IMR-90 (cell line): ENCODE measurements at regions of chr1 and their contacts with region 1.

Region 1: DNA sequence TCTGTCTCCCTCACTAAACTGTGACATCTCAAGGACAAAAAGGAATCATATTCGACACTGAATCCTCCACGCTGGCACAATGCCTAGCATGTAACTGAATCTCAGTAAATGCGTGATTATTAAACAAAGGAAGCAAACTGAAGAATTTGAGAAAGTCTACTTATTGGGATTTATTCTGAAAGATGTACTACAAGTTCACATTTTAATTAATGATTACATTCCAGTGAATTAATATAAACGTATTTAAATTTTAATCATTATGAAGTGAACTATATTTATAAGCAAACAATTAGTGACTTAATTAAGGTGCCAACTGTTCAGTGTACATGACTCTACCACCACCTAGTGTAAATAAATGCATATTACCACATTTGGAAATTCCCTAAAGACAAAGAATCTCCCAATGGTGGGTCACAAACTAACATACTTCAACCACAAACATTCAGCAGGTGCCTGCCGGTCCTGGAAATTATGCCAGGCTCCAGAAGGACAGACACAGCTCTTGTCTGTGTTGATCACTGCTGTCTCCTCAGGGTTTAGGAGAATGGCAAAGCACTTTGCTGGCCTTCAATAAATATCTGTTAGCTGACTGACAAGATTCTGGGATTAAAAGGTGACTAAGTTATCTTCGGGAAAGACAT is 56.3 kb downstream of the SMYD3 start:
- DNase-seq: peak; percentile 35
- ATAC-seq: peak; percentile 61
- H3K4me3 ChIP-seq: no peak overlapping the region
- H3K27ac ChIP-seq: no peak overlapping the region
- H3K4me1 ChIP-seq: peaks cover 2% of the 10 kb centered on the region
- H3K27me3 ChIP-seq: no peaks in the 10 kb centered on the region
- CTCF ChIP-seq: peak; percentile 82
- POLR2A ChIP-seq: no peak
- RAD21 ChIP-seq: peak; percentile 87

Region 2: GRCh38 chr1:245079021-245079609 is 1371.6 kb before region 1 on chr1:
- CTCF ChIA-PET with region 1: no interaction called
- POLR2A ChIA-PET with region 1: no interaction called
- dilution Hi-C with region 1: no loop called
- in situ Hi-C with region 1: no loop called
- intact Hi-C with region 1: loop called (anchors 5 kb)
- DNase-seq: peak; percentile 77
- ATAC-seq: peak; percentile 69
- H3K4me3 ChIP-seq: no peak overlapping the region
- H3K27ac ChIP-seq: no peak overlapping the region
- H3K4me1 ChIP-seq: peaks cover 2% of the 10 kb centered on the region; the same call in 1 of the 2 replicates
- H3K27me3 ChIP-seq: no peaks in the 10 kb centered on the region
- CTCF ChIP-seq: peak; percentile 94
- POLR2A ChIP-seq: no peak
- RAD21 ChIP-seq: peak; percentile 92

Region 3: GRCh38 chr1:245512980-245513578 is 937.7 kb before region 1 on chr1:
- CTCF ChIA-PET with region 1: interaction called, 3 read pairs
- POLR2A ChIA-PET with region 1: no interaction called
- dilution Hi-C with region 1: no loop called
- in situ Hi-C with region 1: no loop called
- intact Hi-C with region 1: loop called (anchors 10 kb)
- DNase-seq: no peak
- ATAC-seq: no peak
- H3K4me3 ChIP-seq: no peak overlapping the region
- H3K27ac ChIP-seq: no peak overlapping the region
- H3K4me1 ChIP-seq: peaks cover 2% of the 10 kb centered on the region; the same call in 1 of the 2 replicates
- H3K27me3 ChIP-seq: no peaks in the 10 kb centered on the region
- CTCF ChIP-seq: no peak
- POLR2A ChIP-seq: no peak
- RAD21 ChIP-seq: no peak

Region 4: DNA sequence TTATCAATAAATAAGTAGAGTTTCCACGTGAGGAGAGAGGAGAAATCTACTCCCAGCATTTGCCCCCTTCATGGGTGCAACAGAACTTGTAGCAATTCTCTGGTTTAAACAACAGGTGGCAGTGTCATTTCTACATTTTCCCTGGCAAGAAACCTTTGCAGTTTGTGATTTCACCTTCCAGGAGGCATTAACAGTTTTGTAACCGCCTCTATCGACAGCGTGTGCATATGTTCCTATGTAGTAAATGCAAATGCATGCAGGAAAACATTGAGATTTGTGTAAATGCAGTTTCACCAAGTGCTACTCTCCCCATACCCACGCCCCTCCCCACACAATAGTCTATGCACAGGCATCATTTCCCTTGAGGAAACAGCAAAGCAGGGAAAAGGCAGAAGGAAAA is 438.4 kb before region 1 on chr1:
- CTCF ChIA-PET with region 1: interaction called, 4 read pairs
- POLR2A ChIA-PET with region 1: no interaction called
- dilution Hi-C with region 1: no loop called
- in situ Hi-C with region 1: loop called (anchors 10 kb)
- intact Hi-C with region 1: loop called (anchors 1 kb)
- DNase-seq: peak; percentile 51
- ATAC-seq: peak; percentile 53
- H3K4me3 ChIP-seq: no peak overlapping the region
- H3K27ac ChIP-seq: no peak overlapping the region
- H3K4me1 ChIP-seq: no peaks in the 10 kb centered on the region
- H3K27me3 ChIP-seq: no peaks in the 10 kb centered on the region
- CTCF ChIP-seq: peak; percentile 65
- POLR2A ChIP-seq: no peak
- RAD21 ChIP-seq: peak; percentile 68

Region 5: GRCh38 chr1:246117066-246117791 is 333.5 kb before region 1 on chr1:
- CTCF ChIA-PET with region 1: no interaction called
- POLR2A ChIA-PET with region 1: no interaction called
- dilution Hi-C with region 1: no loop called
- in situ Hi-C with region 1: loop called (anchors 10 kb)
- intact Hi-C with region 1: no loop called
- DNase-seq: peak; percentile 64
- ATAC-seq: peak; percentile 72
- H3K4me3 ChIP-seq: no peak overlapping the region
- H3K27ac ChIP-seq: no peak overlapping the region
- H3K4me1 ChIP-seq: no peaks in the 10 kb centered on the region
- H3K27me3 ChIP-seq: no peaks in the 10 kb centered on the region
- CTCF ChIP-seq: peak; percentile 55
- POLR2A ChIP-seq: no peak
- RAD21 ChIP-seq: peak; percentile 52

Region 6: DNA sequence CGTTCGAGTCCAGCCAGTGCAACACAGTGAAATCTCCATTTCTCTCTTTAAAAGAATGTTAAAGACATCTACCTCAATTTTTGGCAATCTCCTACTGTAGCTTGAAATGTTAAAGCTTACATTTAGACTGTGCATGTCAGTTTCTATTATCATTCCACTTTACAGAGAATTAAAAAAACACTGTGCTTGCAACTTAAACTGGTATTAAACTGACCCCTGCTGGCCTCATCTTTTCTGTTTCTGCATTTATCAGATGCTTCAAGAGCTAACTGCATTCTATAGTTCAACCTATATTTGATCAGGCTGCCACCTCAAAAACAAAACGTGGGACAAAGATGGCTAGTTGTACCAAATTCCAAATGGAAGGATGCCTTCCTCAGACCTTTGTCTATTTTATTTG is 170.2 kb before region 1 on chr1:
- CTCF ChIA-PET with region 1: no interaction called
- POLR2A ChIA-PET with region 1: no interaction called
- dilution Hi-C with region 1: no loop called
- in situ Hi-C with region 1: no loop called
- intact Hi-C with region 1: loop called (anchors 5 kb)
- DNase-seq: peak; percentile 60
- ATAC-seq: peak; percentile 66; the same call in 1 of the 2 replicates
- H3K4me3 ChIP-seq: no peak overlapping the region
- H3K27ac ChIP-seq: no peak overlapping the region
- H3K4me1 ChIP-seq: peaks cover 3% of the 10 kb centered on the region; the same call in 1 of the 2 replicates
- H3K27me3 ChIP-seq: no peaks in the 10 kb centered on the region
- CTCF ChIP-seq: peak; percentile 56
- POLR2A ChIP-seq: no peak
- RAD21 ChIP-seq: peak; percentile 58